Naive thymus-derived CD4-positive, alpha-beta T cell (primary cell): ENCODE measurements at regions of chr1 and their contacts with region 1.

Region 1: GRCh38 chr1:112369392-112370285 is 26.4 kb upstream of the CTTNBP2NL start:
- DNase-seq: peak; percentile 52 to 87 (median 76)
- ATAC-seq: peak; percentile 100
- H3K4me3 ChIP-seq: no peak overlapping the region
- H3K4me3 Mint-ChIP-seq: peak overlapping the region in 2 of 10 donors; percentile 39 to 52
- H3K27ac ChIP-seq: no peak overlapping the region
- H3K27ac Mint-ChIP-seq: no peak overlapping the region
- H3K4me1 ChIP-seq: peaks cover 0 to 4% of the 10 kb centered on the region in 2 donors
- H3K4me1 Mint-ChIP-seq: peaks cover 3 to 5% (median 4%) of the 10 kb centered on the region in 7 donors
- H3K27me3 ChIP-seq: peaks cover 0 to 4% of the 10 kb centered on the region in 2 donors
- H3K27me3 Mint-ChIP-seq: peaks cover 30 to 55% (median 47%) of the 10 kb centered on the region in 5 donors

Region 2: DNA sequence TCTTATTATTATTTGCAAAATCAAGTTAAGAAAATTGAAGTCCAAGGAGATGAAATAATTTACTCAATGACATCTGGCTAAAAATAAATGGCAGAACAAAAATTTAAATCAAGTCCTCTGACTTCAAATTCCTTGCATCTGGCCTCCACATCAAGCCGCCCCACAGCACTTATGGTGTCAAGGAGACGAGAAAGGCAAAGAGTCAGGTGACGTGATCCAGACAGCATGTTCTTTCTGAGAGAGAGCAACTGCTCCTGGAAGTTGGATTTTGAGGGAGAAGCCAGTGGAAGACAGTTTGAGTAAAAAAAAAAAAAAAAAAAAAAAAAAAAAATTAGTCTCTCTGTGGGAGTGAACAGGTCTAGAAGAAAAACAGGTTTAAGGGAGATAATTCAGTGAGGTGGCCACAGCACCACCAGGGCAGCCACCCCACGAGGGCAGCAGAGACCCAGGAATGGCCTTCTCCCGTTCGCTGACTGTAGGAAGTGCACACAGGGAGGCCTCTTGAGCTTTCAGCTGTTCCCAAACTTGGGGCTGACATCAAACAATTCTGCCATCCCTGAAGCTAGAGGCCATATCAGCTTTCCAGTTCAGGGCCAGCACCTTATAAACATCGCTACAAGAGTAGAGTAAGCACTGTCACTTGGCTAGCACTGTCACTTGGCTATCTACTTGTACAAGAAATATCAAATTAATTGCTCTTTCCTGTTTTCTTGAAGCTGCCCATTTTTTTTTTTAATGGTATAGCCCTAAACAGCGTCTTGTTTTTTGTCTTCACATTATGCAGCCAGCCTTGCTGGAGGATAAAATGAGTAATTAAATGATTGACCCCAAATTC is 888.0 kb before region 1 on chr1:
- CTCF ChIA-PET with region 1: no interaction called
- POLR2A ChIA-PET with region 1: no interaction called
- intact Hi-C with region 1: loop called in 1 of 2 experiments (anchors 5 kb)
- DNase-seq: peak; percentile 23 to 65 (median 54)
- ATAC-seq: peak; percentile 80
- H3K4me3 ChIP-seq: no peak overlapping the region
- H3K4me3 Mint-ChIP-seq: peak overlapping the region in 1 of 10 donors; percentile 20
- H3K27ac ChIP-seq: no peak overlapping the region
- H3K27ac Mint-ChIP-seq: peak overlapping the region in 4 of 9 donors; percentile 22 to 86 (median 56)
- H3K4me1 ChIP-seq: peaks cover 22 to 25% of the 10 kb centered on the region in 2 donors
- H3K4me1 Mint-ChIP-seq: peaks cover 32 to 68% (median 53%) of the 10 kb centered on the region in 7 donors
- H3K27me3 ChIP-seq: no peaks in the 10 kb centered on the region
- H3K27me3 Mint-ChIP-seq: peaks cover 0 to 25% (median 0%) of the 10 kb centered on the region in 5 donors

Region 3: GRCh38 chr1:111720274-111720976 is 649.2 kb before region 1 on chr1:
- CTCF ChIA-PET with region 1: no interaction called
- POLR2A ChIA-PET with region 1: no interaction called
- intact Hi-C with region 1: loop called in 1 of 2 experiments (anchors 10 kb)
- DNase-seq: no peak
- ATAC-seq: no peak
- H3K4me3 ChIP-seq: no peak overlapping the region
- H3K4me3 Mint-ChIP-seq: no peak overlapping the region
- H3K27ac ChIP-seq: no peak overlapping the region
- H3K27ac Mint-ChIP-seq: peak overlapping the region in 7 of 9 donors; percentile 31 to 80 (median 52)
- H3K4me1 ChIP-seq: peaks cover 0 to 8% of the 10 kb centered on the region in 2 donors
- H3K4me1 Mint-ChIP-seq: peaks cover 9 to 31% (median 19%) of the 10 kb centered on the region in 7 donors
- H3K27me3 ChIP-seq: no peaks in the 10 kb centered on the region
- H3K27me3 Mint-ChIP-seq: no peaks in the 10 kb centered on the region

Region 4: GRCh38 chr1:112298558-112298957 is 71.1 kb before region 1 on chr1:
- CTCF ChIA-PET with region 1: interaction called, 3 read pairs
- POLR2A ChIA-PET with region 1: no interaction called
- intact Hi-C with region 1: loop called (anchors 2 kb)
- DNase-seq: peak in 3 of 9 donors; percentile 2 to 23 (median 14)
- ATAC-seq: no peak
- H3K4me3 ChIP-seq: no peak overlapping the region
- H3K4me3 Mint-ChIP-seq: no peak overlapping the region
- H3K27ac ChIP-seq: no peak overlapping the region
- H3K27ac Mint-ChIP-seq: no peak overlapping the region
- H3K4me1 ChIP-seq: no peaks in the 10 kb centered on the region
- H3K4me1 Mint-ChIP-seq: peaks cover 0 to 1% (median 0%) of the 10 kb centered on the region in 7 donors
- H3K27me3 ChIP-seq: no peaks in the 10 kb centered on the region
- H3K27me3 Mint-ChIP-seq: peaks cover 3 to 15% (median 12%) of the 10 kb centered on the region in 5 donors

Region 5: DNA sequence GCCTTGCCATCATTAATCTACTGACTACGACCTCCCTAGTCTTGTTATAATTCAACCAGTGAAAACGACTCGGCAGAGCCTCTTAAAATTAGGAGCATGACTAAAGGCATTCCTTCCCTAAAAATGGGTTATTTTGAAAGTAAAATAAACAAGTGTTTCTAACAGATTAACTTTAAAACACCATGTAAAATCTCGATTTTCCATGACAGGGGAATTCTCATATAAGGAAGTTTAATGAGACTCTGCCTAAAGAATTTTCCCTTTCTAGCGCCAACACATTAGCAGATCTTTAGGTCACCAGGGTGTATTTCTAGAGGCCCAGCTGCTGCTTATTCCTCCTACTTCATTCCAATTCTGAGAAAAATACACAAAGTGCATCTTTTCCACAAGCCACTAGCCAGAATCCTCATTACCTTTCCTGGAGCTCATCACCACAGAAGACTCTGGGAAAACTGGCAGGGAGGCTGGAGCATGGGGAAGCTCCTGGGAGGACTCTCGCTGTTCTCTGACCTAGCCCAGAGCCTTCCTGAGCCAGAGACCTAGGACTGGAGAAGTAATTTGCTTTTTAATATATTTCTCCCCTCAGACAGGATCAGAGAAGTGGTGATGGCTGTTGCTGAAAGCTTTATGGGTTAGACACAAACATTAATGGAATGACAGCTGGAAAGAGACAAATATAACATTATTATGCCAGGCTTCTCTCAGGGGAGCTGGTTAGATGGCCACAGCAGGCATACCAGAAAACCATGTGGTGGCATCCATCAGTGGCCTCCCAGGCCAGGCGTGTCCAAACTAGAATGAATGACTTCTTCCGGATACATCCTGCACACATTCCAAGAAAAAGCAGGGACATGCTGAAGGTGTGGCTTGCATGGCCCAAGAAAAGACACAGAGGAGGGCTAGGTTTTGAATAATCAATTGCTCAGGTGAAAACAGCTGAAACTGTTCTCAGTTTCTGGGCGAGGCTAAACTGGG is 37.2 kb before region 1 on chr1:
- CTCF ChIA-PET with region 1: no interaction called
- POLR2A ChIA-PET with region 1: no interaction called
- intact Hi-C with region 1: no loop called
- DNase-seq: no peak
- ATAC-seq: no peak
- H3K4me3 ChIP-seq: no peak overlapping the region
- H3K4me3 Mint-ChIP-seq: no peak overlapping the region
- H3K27ac ChIP-seq: no peak overlapping the region
- H3K27ac Mint-ChIP-seq: no peak overlapping the region
- H3K4me1 ChIP-seq: no peaks in the 10 kb centered on the region
- H3K4me1 Mint-ChIP-seq: peaks cover 6 to 9% (median 7%) of the 10 kb centered on the region in 7 donors
- H3K27me3 ChIP-seq: no peaks in the 10 kb centered on the region
- H3K27me3 Mint-ChIP-seq: peaks cover 15 to 43% (median 29%) of the 10 kb centered on the region in 5 donors

Region 6: GRCh38 chr1:112381324-112382076 is 11.9 kb after region 1 on chr1:
- CTCF ChIA-PET with region 1: interaction called, 10 read pairs
- POLR2A ChIA-PET with region 1: no interaction called
- intact Hi-C with region 1: no loop called
- DNase-seq: no peak
- ATAC-seq: no peak
- H3K4me3 ChIP-seq: no peak overlapping the region
- H3K4me3 Mint-ChIP-seq: no peak overlapping the region
- H3K27ac ChIP-seq: no peak overlapping the region
- H3K27ac Mint-ChIP-seq: no peak overlapping the region
- H3K4me1 ChIP-seq: no peaks in the 10 kb centered on the region
- H3K4me1 Mint-ChIP-seq: no peaks in the 10 kb centered on the region
- H3K27me3 ChIP-seq: no peaks in the 10 kb centered on the region
- H3K27me3 Mint-ChIP-seq: peaks cover 34 to 52% (median 42%) of the 10 kb centered on the region in 5 donors

Region 7: GRCh38 chr1:112557385-112557784 is 187.7 kb after region 1 on chr1:
- CTCF ChIA-PET with region 1: no interaction called
- POLR2A ChIA-PET with region 1: no interaction called
- intact Hi-C with region 1: no loop called
- DNase-seq: no peak
- ATAC-seq: no peak
- H3K4me3 ChIP-seq: no peak overlapping the region
- H3K4me3 Mint-ChIP-seq: no peak overlapping the region
- H3K27ac ChIP-seq: no peak overlapping the region
- H3K27ac Mint-ChIP-seq: no peak overlapping the region
- H3K4me1 ChIP-seq: no peaks in the 10 kb centered on the region
- H3K4me1 Mint-ChIP-seq: peaks cover 0 to 5% (median 0%) of the 10 kb centered on the region in 7 donors
- H3K27me3 ChIP-seq: no peaks in the 10 kb centered on the region
- H3K27me3 Mint-ChIP-seq: no peaks in the 10 kb centered on the region